GM12878 (cell line): ENCODE measurements at regions of chr1 and their contacts with region 1.

Region 1: DNA sequence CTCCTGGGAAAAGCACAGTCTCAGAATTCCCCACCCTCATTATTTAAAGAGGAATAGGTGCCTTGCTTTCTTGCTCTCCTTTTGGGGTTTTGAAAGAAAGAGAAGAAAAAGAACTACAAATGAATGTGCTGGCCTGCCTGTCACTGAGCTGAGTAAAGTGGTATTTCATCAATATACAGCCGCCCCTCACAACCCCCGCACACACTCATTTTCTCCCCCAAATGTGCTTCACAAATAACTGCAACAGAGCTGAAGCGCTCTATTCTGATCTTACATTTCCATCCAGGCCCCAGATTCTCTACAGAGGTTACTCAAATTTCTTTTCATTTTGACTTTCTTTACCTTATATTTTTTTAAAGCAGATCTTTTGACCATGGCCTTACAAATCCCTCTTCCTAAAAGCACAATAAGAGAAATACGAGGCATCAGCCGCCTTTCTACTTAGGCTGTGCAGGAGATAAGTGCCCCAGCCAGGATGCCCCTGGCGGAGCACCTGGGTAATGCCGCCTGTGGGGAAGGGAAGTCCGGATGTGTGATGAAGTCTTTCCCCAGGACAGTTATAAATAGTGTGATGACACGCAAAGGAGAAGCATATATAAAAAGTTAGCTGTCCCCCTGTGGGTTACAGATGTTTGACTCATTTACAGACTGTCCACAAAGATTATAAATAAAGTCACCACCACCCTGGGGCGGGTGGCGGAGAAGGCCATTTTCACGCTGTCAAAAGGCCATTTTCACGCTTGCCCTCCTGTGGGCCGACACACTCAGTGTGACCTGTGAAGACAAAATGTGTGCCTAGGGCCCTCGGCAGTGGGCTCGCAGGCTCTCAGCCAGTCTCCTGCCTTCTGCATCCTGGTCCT is 6.5 kb downstream of the KCNN3 start:
- DNase-seq: peak; percentile 85
- ATAC-seq: peak; percentile 39
- H3K4me3 ChIP-seq: peak overlapping the region; percentile 49; the same call in 1 of the 2 replicates
- H3K27ac ChIP-seq: peak overlapping the region; percentile 79
- H3K4me1 ChIP-seq: peaks cover 88% of the 10 kb centered on the region
- H3K27me3 ChIP-seq: no peaks in the 10 kb centered on the region
- CTCF ChIP-seq: peak; percentile 77 to 95 (median 88)
- EP300 ChIP-seq: peak; percentile 61 to 89; a peak in 2 of 4 replicates
- POLR2A ChIP-seq: peak; percentile 39; the same call in 1 of the 2 replicates
- RAD21 ChIP-seq: peak; percentile 70

Region 2: GRCh38 chr1:154784924-154785531 is 78.5 kb before region 1 on chr1:
- CTCF ChIA-PET with region 1: interaction called, 4 read pairs
- POLR2A ChIA-PET with region 1: interaction called, 7 read pairs
- RAD21 ChIA-PET with region 1: interaction called, 5 read pairs
- SMC1A ChIA-PET with region 1: interaction called, 15 read pairs
- in situ Hi-C with region 1: no loop called
- intact Hi-C with region 1: loop called (anchors 2 kb)
- DNase-seq: peak; percentile 76
- ATAC-seq: peak; percentile 94
- H3K4me3 ChIP-seq: peak overlapping the region; percentile 42; the same call in 1 of the 2 replicates
- H3K27ac ChIP-seq: peak overlapping the region; percentile 93
- H3K4me1 ChIP-seq: peaks cover 29% of the 10 kb centered on the region
- H3K27me3 ChIP-seq: no peaks in the 10 kb centered on the region
- CTCF ChIP-seq: no peak
- EP300 ChIP-seq: no peak
- POLR2A ChIP-seq: no peak
- RAD21 ChIP-seq: no peak

Region 3: DNA sequence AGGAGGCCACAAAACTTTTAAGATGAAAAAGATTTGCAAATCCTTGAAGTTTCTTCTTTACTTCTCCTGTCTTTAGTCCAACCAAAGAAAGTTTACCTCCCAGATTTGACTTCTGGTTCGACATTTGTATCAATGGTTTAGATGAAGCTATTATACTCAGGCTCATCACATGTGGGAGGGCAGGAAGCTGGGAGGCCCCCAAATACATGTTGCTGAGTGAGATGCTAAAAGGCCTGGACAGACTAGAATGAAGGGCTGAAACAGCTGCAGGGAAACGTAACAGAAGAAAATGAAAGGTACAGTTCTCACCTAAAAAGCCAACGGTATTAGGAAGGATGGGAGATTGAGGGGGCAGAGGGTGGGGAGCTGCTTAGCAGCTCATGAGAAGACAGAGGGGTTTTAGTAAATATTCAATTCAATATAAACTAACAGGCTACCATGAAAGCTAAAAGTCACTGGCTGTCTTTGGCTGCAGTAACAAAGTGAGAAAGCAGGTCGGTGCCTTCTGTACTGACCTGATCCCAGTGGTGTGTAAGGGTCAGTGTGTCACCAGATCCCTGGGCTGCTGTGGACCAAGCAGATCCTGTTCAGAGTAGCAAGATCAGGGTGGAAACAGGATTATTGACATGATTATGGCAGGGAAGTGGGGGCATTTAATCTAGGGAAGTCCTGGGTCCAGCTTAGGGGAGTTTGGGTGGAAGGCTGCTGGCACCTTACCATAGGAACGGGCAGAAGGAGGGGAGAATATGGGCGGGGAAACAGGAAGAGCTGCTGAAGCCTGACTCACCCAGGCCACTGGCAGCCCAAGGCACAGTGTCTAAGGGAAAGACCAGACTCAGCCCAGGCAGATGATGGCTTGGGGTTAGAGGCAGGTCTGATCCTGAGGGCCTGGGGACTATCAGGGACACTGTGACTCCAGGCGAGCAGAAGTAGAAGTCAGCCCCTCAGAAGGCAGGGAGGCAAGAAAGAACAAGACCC is 53.8 kb before region 1 on chr1:
- CTCF ChIA-PET with region 1: interaction called, 11 read pairs
- POLR2A ChIA-PET with region 1: interaction called, 26 read pairs
- RAD21 ChIA-PET with region 1: interaction called, 66 read pairs
- SMC1A ChIA-PET with region 1: interaction called, 32 read pairs
- in situ Hi-C with region 1: no loop called
- intact Hi-C with region 1: loop called (anchors 1 kb)
- DNase-seq: no peak
- ATAC-seq: peak; percentile 21
- H3K4me3 ChIP-seq: no peak overlapping the region
- H3K27ac ChIP-seq: peak overlapping the region; percentile 51
- H3K4me1 ChIP-seq: peaks cover 49% of the 10 kb centered on the region
- H3K27me3 ChIP-seq: no peaks in the 10 kb centered on the region
- CTCF ChIP-seq: no peak
- EP300 ChIP-seq: no peak
- POLR2A ChIP-seq: no peak
- RAD21 ChIP-seq: no peak

Region 4: DNA sequence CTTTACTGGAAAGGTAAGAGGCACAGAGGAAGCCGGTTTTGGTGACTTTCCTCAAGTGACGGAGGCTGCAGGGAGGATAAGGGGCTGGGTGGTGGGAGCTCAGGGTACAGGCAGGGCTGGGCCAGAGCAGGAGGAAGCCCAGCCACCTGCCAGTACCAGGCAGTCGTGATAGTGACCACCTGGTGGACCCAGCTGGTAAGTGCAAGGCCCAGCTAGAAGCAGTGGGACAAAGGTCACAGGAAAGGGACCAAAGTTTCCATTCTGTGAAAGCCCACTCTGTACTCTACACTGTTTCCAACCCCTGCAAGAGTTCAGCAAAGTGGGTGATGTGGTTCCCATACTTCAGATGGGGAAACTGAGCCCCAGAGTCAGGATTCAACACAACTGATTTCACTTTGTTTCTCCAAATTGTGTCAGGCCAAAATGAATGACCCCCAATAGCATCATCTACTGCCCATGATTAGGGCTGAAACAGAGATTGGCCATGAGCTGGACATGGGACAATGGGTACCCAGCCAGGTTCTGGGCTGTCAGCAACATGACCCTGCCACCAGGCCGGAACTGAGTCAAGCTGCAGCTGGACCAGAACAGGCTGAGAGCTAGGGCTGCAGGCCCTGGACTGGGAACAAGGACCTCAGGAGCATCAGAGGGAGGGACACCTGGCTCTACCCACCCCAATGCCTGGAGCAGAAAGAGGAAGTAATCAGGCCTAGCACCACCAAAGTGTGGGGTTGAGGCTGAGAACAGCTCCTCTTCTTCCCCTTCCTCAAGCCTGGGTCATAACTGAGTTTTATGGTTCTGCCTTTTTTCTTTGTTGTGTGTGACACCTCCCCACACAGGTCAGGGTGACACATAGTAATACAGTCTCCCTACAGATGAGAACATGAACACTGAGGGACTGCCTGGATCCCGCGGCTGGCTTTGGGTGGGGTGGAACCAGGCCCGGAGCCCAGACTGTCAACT is 43.6 kb before region 1 on chr1:
- CTCF ChIA-PET with region 1: interaction called, 5 read pairs
- POLR2A ChIA-PET with region 1: interaction called, 9 read pairs
- RAD21 ChIA-PET with region 1: interaction called, 9 read pairs
- SMC1A ChIA-PET with region 1: interaction called, 21 read pairs
- in situ Hi-C with region 1: no loop called
- intact Hi-C with region 1: loop called (anchors 5 kb)
- DNase-seq: no peak
- ATAC-seq: peak; percentile 83
- H3K4me3 ChIP-seq: no peak overlapping the region
- H3K27ac ChIP-seq: peak overlapping the region; percentile 10; the same call in 1 of the 2 replicates
- H3K4me1 ChIP-seq: peaks cover 35% of the 10 kb centered on the region
- H3K27me3 ChIP-seq: no peaks in the 10 kb centered on the region
- CTCF ChIP-seq: peak; percentile 11 to 59 (median 48)
- EP300 ChIP-seq: no peak
- POLR2A ChIP-seq: no peak
- RAD21 ChIP-seq: peak; percentile 47

Region 5: GRCh38 chr1:154837672-154838171 is 25.8 kb before region 1 on chr1:
- CTCF ChIA-PET with region 1: interaction called, 12 read pairs
- POLR2A ChIA-PET with region 1: interaction called, 12 read pairs
- RAD21 ChIA-PET with region 1: interaction called, 21 read pairs
- SMC1A ChIA-PET with region 1: interaction called, 24 read pairs
- in situ Hi-C with region 1: no loop called
- intact Hi-C with region 1: no loop called
- DNase-seq: no peak
- ATAC-seq: peak; percentile 84
- H3K4me3 ChIP-seq: no peak overlapping the region
- H3K27ac ChIP-seq: no peak overlapping the region
- H3K4me1 ChIP-seq: peaks cover 33% of the 10 kb centered on the region
- H3K27me3 ChIP-seq: no peaks in the 10 kb centered on the region
- CTCF ChIP-seq: no peak
- EP300 ChIP-seq: peak in 1 of 2 experiments; percentile 73; a peak in 2 of 4 replicates
- POLR2A ChIP-seq: peak; percentile 47; the same call in 1 of the 2 replicates
- RAD21 ChIP-seq: no peak

Region 6: DNA sequence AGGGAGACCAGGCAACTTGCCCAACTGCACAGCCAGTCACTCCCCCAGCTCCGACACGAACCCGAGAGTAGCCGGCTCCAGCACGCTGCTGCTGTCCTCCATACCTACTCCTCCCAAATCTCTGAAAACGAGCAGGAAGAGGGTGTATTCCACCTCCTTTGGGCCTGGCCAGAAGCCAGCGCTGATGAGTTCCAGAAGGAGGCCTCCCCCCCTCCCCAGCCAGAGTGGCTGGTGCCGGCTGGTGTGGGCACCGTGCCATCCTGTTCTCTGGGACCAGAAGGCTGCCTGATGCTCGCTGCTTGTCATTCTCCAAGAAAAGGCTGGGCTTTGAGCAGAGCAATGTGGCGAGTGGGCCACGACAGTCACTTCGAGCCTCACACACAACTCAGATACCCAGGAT is 15.7 kb before region 1 on chr1:
- CTCF ChIA-PET with region 1: interaction called, 18 read pairs
- POLR2A ChIA-PET with region 1: interaction called, 204 read pairs
- RAD21 ChIA-PET with region 1: interaction called, 254 read pairs
- SMC1A ChIA-PET with region 1: interaction called, 57 read pairs
- in situ Hi-C with region 1: no loop called
- intact Hi-C with region 1: no loop called
- DNase-seq: no peak
- ATAC-seq: no peak
- H3K4me3 ChIP-seq: no peak overlapping the region
- H3K27ac ChIP-seq: no peak overlapping the region
- H3K4me1 ChIP-seq: peaks cover 52% of the 10 kb centered on the region
- H3K27me3 ChIP-seq: no peaks in the 10 kb centered on the region
- CTCF ChIP-seq: no peak
- EP300 ChIP-seq: no peak
- POLR2A ChIP-seq: no peak
- RAD21 ChIP-seq: no peak

Region 7: DNA sequence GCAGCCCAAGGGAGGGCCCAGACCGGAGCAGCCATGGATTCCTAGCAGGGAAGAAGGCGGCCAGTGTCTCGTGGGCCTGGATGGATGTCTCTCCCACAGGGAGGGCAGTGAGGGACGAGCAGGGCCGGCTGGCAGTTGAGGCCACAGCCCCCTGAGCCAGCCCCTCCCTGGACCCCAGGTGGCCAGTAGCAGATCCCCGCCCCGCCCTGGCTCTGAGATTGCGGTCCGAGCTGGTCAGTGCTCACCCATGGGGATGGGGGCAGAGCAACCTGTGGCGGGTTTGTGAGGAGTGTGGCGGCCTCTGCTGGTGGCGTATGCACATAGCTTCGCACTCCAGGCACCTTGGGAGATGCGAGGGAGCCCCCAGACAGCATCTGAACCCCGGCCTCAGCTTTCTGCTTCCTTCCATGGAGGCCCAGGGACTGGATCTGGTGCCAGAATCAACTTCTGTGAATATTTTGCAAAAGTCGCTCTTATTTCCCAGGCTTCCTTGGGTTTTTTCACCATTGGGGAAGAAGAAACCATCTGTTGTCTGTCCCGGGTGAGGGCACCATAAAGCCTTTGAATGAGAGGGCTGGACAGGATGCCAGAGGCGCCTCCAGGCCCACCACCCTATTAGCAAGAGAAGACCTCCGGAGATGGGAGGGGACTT is 15.0 kb after region 1 on chr1:
- CTCF ChIA-PET with region 1: interaction called, 35 read pairs
- POLR2A ChIA-PET with region 1: interaction called, 204 read pairs
- RAD21 ChIA-PET with region 1: interaction called, 254 read pairs
- SMC1A ChIA-PET with region 1: interaction called, 57 read pairs
- in situ Hi-C with region 1: no loop called
- intact Hi-C with region 1: no loop called
- DNase-seq: no peak
- ATAC-seq: peak; percentile 94
- H3K4me3 ChIP-seq: no peak overlapping the region
- H3K27ac ChIP-seq: no peak overlapping the region
- H3K4me1 ChIP-seq: peaks cover 10% of the 10 kb centered on the region
- H3K27me3 ChIP-seq: no peaks in the 10 kb centered on the region
- CTCF ChIP-seq: peak; percentile 92 to 97 (median 94)
- EP300 ChIP-seq: no peak
- POLR2A ChIP-seq: no peak
- RAD21 ChIP-seq: peak; percentile 96